HEK293 (cell line): ENCODE measurements at regions of chr17 and their contacts with region 1.

Region 1: GRCh38 chr17:78708510-78708973 is 73.5 kb downstream of the CYTH1 start:
- H3K4me3 ChIP-seq: no peak overlapping the region
- H3K27ac ChIP-seq: no peak overlapping the region
- H3K4me1 ChIP-seq: peaks cover 16% of the 10 kb centered on the region
- CTCF ChIP-seq: peak; percentile 80

Region 2: GRCh38 chr17:78013683-78014467 is 694.7 kb before region 1 on chr17:
- CTCF ChIA-PET with region 1: no interaction called
- POLR2A ChIA-PET with region 1: no interaction called
- H3K4me3 ChIP-seq: no peak overlapping the region
- H3K27ac ChIP-seq: no peak overlapping the region
- H3K4me1 ChIP-seq: no peaks in the 10 kb centered on the region
- CTCF ChIP-seq: peak; percentile 51

Region 3: GRCh38 chr17:78474614-78475146 is 233.9 kb before region 1 on chr17:
- CTCF ChIA-PET with region 1: no interaction called
- POLR2A ChIA-PET with region 1: no interaction called
- H3K4me3 ChIP-seq: no peak overlapping the region
- H3K27ac ChIP-seq: no peak overlapping the region
- H3K4me1 ChIP-seq: no peaks in the 10 kb centered on the region
- CTCF ChIP-seq: no peak

Region 4: DNA sequence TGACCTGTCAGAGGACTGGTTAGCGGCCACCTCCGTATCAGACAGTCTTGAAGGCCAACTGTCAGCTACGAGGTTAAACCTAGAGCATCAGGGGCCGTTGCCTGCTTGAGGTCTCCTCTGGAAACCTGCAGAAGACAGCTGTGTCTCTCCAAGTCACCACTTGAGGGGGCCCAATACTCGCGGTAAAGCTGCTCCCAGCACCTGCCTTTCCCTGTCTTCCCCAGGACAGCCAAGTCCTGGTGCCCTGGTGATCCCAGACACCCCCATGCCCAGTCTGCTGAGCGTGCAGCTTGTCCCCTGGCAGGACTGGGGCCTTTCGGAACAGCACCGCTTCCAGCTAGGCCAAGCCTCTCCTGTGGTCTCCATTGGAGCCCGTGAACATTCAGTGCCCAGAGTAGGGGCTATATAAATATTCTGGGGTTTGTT is 211.4 kb before region 1 on chr17:
- CTCF ChIA-PET with region 1: interaction called, 157 read pairs
- POLR2A ChIA-PET with region 1: interaction called, 4 read pairs
- H3K4me3 ChIP-seq: no peak overlapping the region
- H3K27ac ChIP-seq: no peak overlapping the region
- H3K4me1 ChIP-seq: no peaks in the 10 kb centered on the region
- CTCF ChIP-seq: peak; percentile 86

Region 5: DNA sequence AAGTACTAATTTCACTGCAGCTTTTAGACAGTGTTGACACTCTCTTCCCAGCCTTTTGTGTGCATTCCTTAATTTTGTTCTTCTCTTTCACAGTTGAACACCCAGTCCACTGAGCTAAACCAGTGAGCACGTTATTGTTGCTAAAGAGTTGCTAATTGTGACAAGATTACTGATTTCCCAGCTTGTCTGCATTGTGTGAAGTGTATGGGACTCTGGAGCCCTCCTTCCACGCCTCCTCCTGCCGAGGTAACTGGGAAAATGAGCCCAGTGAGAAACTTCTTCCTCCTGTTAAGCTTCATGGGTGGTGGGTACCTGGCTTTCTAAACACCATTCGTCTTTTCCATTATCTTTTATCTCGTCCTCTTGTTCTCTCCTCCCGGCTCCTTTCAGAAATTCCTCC is 101.5 kb before region 1 on chr17:
- CTCF ChIA-PET with region 1: interaction called, 32 read pairs
- POLR2A ChIA-PET with region 1: no interaction called
- H3K4me3 ChIP-seq: no peak overlapping the region
- H3K27ac ChIP-seq: no peak overlapping the region
- H3K4me1 ChIP-seq: no peaks in the 10 kb centered on the region
- CTCF ChIP-seq: no peak

Region 6: GRCh38 chr17:78689029-78689428 is 19.5 kb before region 1 on chr17:
- CTCF ChIA-PET with region 1: interaction called, 13 read pairs
- POLR2A ChIA-PET with region 1: interaction called, 4 read pairs
- H3K4me3 ChIP-seq: no peak overlapping the region
- H3K27ac ChIP-seq: no peak overlapping the region
- H3K4me1 ChIP-seq: no peaks in the 10 kb centered on the region
- CTCF ChIP-seq: no peak

Region 7: GRCh38 chr17:78736526-78737079 is 28.1 kb after region 1 on chr17:
- CTCF ChIA-PET with region 1: interaction called, 36 read pairs
- POLR2A ChIA-PET with region 1: interaction called, 9 read pairs
- H3K4me3 ChIP-seq: peak overlapping the region; percentile 53
- H3K27ac ChIP-seq: peak overlapping the region; percentile 77
- H3K4me1 ChIP-seq: peaks cover 23% of the 10 kb centered on the region
- CTCF ChIP-seq: peak; percentile 32; the same call in 1 of the 2 replicates